ENCODE measurements at regions of chr12 and their contacts with region 1.

Region 1: DNA sequence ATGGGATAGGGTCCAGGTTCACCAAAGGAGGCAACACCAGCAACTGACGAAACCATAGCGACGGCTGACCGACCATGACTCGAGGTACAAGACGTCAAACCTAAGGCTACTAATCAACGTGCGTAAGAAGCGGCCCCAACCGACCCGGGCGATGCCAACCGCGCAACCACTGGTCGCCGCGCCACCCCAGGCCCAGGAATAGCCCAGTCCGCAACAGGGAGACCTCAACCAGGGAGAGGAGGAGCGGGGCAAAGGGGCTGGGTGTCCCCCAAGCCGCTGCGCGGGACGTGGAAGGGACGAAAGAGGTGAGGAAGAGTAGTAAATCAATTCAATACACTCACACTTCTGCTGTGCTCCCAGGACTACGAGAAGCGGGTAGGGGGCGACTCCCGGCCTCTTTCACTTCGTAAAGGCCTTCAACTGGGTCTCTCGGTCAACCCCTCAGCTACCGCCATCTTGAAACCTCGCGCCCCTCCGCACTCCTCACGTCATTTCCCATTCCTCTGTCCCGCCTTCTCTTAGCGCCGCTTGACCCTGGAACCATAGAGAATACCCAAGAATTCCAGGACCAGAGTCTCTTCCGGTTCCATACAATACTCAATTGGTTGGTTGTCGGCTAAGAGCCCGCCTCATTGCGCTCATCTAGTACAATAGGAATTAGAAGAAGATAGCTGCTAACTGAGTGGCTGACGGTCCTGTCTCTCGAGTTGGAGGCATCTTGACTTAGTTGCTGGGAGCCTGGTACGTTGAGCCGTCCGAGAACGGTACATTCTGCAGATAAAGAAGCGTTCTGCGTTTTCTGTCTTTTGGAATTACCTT is at the starts of genes C12orf60 and WBP11:
- DNase-seq: peak; percentile 98
- ATAC-seq: peak; percentile 99
- H3K4me3 ChIP-seq: peak within 1 kb of the TSS; percentile 86 to 94
- H3K27ac ChIP-seq: peak within 1 kb of the TSS; percentile 79
- H3K4me1 ChIP-seq: peaks cover 6 to 15% of the 10 kb centered on the region in 2 experiments; a peak in 3 of 4 replicates
- H3K27me3 ChIP-seq: no peaks in the 10 kb centered on the region
- CTCF ChIP-seq: no peak
- POLR2A ChIP-seq: peak; percentile 95
- RAD21 ChIP-seq: no peak
- total RNA-seq, gene C12orf60: 3.5 TPM
- total RNA-seq, gene WBP11: 67.4 TPM

Region 2: DNA sequence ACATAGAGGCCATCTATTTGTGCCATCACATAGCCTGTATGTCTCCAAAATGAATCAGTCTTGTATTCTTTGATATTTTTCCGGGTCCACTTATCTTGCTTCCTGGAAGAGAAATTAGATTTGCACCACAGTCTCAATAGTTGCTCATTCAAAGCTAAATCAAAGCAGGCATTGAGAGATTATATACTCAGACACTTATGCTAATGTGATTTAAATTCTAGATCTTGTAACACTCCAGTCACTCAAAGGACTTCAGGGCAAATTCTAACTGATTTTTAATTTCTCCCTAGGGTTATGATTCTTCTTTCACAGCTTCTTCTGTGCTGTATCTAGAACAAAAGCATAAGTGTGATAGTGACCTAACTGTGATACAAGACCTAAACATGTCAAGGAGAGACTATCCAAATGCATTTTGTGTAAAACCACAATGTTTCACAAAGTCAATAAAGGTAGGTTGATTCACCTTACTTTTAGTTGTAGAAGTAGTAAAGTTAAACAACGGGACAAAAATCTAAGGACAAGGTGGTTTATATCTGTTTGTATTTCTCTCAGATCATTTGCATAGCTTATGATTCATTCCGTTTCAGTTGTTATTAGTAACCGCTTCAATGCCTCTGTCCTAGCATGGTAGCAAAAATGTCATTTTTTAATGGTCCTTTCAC is 262.3 kb before region 1 on chr12:
- CTCF ChIA-PET with region 1: no interaction called
- POLR2A ChIA-PET with region 1: no interaction called
- RAD21 ChIA-PET with region 1: no interaction called
- intact Hi-C with region 1: no loop called
- DNase-seq: no peak
- ATAC-seq: no peak
- H3K4me3 ChIP-seq: no peak overlapping the region
- H3K27ac ChIP-seq: no peak overlapping the region
- H3K4me1 ChIP-seq: no peaks in the 10 kb centered on the region
- H3K27me3 ChIP-seq: no peaks in the 10 kb centered on the region
- CTCF ChIP-seq: no peak
- POLR2A ChIP-seq: no peak
- RAD21 ChIP-seq: no peak

Region 3: GRCh38 chr12:14769969-14770495 is 33.2 kb before region 1 on chr12:
- CTCF ChIA-PET with region 1: no interaction called
- POLR2A ChIA-PET with region 1: interaction called, 13 read pairs
- RAD21 ChIA-PET with region 1: no interaction called
- intact Hi-C with region 1: no loop called
- DNase-seq: peak; percentile 56
- ATAC-seq: peak; percentile 59
- H3K4me3 ChIP-seq: peak overlapping the region; percentile 71 to 72
- H3K27ac ChIP-seq: peak overlapping the region; percentile 82
- H3K4me1 ChIP-seq: peaks cover 0 to 19% of the 10 kb centered on the region in 2 experiments; a peak in 3 of 4 replicates
- H3K27me3 ChIP-seq: no peaks in the 10 kb centered on the region
- CTCF ChIP-seq: peak; percentile 14 to 59 (median 51); a peak in 4 of 6 replicates
- POLR2A ChIP-seq: peak; percentile 19
- RAD21 ChIP-seq: 0 out of 2 replicates have a peak, but pooled peaks have one; percentile 34

Region 4: GRCh38 chr12:14960548-14961465 is 157.6 kb after region 1 on chr12:
- CTCF ChIA-PET with region 1: no interaction called
- POLR2A ChIA-PET with region 1: no interaction called
- RAD21 ChIA-PET with region 1: no interaction called
- intact Hi-C with region 1: no loop called
- DNase-seq: no peak
- ATAC-seq: peak; percentile 38; the same call in 1 of the 2 replicates
- H3K4me3 ChIP-seq: no peak overlapping the region
- H3K27ac ChIP-seq: no peak overlapping the region
- H3K4me1 ChIP-seq: peaks cover 0 to 7% of the 10 kb centered on the region in 2 experiments; a peak in 2 of 4 replicates
- H3K27me3 ChIP-seq: no peaks in the 10 kb centered on the region
- CTCF ChIP-seq: no peak
- POLR2A ChIP-seq: no peak
- RAD21 ChIP-seq: no peak